ENCODE measurements at regions of chr1 and their contacts with region 1.

Region 1: GRCh38 chr1:243850452-243851256 is 611 bp upstream of the AKT3 start:
- DNase-seq: peak; percentile 87 to 91 (median 89)
- H3K4me3 ChIP-seq: peak overlapping the region; percentile 63 to 70
- H3K4me3 Mint-ChIP-seq: peak overlapping the region; percentile 90 to 95 (median 94)
- H3K27ac ChIP-seq: peak overlapping the region; percentile 95
- H3K27ac Mint-ChIP-seq: peak overlapping the region; percentile 86 to 98 (median 97)
- H3K4me1 ChIP-seq: peaks cover 38% of the 10 kb centered on the region
- H3K4me1 Mint-ChIP-seq: peaks cover 22 to 39% (median 31%) of the 10 kb centered on the region in 4 donors
- H3K27me3 ChIP-seq: no peaks in the 10 kb centered on the region
- H3K27me3 Mint-ChIP-seq: peaks cover 0 to 2% of the 10 kb centered on the region in 2 donors

Region 2: DNA sequence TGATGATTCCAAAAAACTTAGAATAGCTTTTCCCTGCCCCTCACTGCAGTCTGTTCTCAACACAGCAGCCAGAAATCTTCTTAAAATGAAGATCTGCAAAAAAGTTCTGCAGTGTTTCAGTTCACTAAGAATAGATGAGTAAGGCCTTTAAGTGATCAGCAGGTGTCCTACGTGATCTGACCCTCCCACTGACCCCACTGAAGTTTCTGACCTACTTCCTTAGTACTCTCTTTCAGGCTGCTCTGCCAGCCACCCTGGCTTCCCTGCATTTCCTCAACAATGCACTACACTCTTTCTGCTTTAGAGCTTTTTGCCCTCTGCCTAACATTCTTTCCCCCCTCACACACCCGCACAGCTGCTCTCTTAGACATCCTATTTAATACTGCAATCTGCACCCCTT is 183.1 kb before region 1 on chr1:
- CTCF ChIA-PET with region 1: no interaction called
- POLR2A ChIA-PET with region 1: no interaction called
- intact Hi-C with region 1: no loop called
- DNase-seq: no peak
- H3K4me3 ChIP-seq: no peak overlapping the region
- H3K4me3 Mint-ChIP-seq: no peak overlapping the region
- H3K27ac ChIP-seq: no peak overlapping the region
- H3K27ac Mint-ChIP-seq: peak overlapping the region in 6 of 7 donors; percentile 14 to 69 (median 42)
- H3K4me1 ChIP-seq: no peaks in the 10 kb centered on the region
- H3K4me1 Mint-ChIP-seq: peaks cover 8 to 27% (median 12%) of the 10 kb centered on the region in 4 donors
- H3K27me3 ChIP-seq: no peaks in the 10 kb centered on the region
- H3K27me3 Mint-ChIP-seq: no peaks in the 10 kb centered on the region

Region 3: GRCh38 chr1:243748706-243749283 is 101.9 kb before region 1 on chr1:
- CTCF ChIA-PET with region 1: interaction called, 4 read pairs
- POLR2A ChIA-PET with region 1: no interaction called
- intact Hi-C with region 1: loop called (anchors 5 kb)
- DNase-seq: peak in 4 of 5 donors; percentile 32 to 56 (median 44)
- H3K4me3 ChIP-seq: no peak overlapping the region
- H3K4me3 Mint-ChIP-seq: no peak overlapping the region
- H3K27ac ChIP-seq: no peak overlapping the region
- H3K27ac Mint-ChIP-seq: peak overlapping the region in 5 of 7 donors; percentile 14 to 75 (median 29)
- H3K4me1 ChIP-seq: peaks cover 5% of the 10 kb centered on the region
- H3K4me1 Mint-ChIP-seq: peaks cover 28 to 46% (median 36%) of the 10 kb centered on the region in 4 donors
- H3K27me3 ChIP-seq: no peaks in the 10 kb centered on the region
- H3K27me3 Mint-ChIP-seq: no peaks in the 10 kb centered on the region

Region 4: GRCh38 chr1:243864913-243865312 is 14.3 kb after region 1 on chr1:
- CTCF ChIA-PET with region 1: no interaction called
- POLR2A ChIA-PET with region 1: no interaction called
- intact Hi-C with region 1: no loop called
- DNase-seq: no peak
- H3K4me3 ChIP-seq: no peak overlapping the region
- H3K4me3 Mint-ChIP-seq: no peak overlapping the region
- H3K27ac ChIP-seq: no peak overlapping the region
- H3K27ac Mint-ChIP-seq: no peak overlapping the region
- H3K4me1 ChIP-seq: no peaks in the 10 kb centered on the region
- H3K4me1 Mint-ChIP-seq: peaks cover 0 to 4% (median 0%) of the 10 kb centered on the region in 4 donors
- H3K27me3 ChIP-seq: no peaks in the 10 kb centered on the region
- H3K27me3 Mint-ChIP-seq: peaks cover 0 to 2% of the 10 kb centered on the region in 2 donors

Region 5: DNA sequence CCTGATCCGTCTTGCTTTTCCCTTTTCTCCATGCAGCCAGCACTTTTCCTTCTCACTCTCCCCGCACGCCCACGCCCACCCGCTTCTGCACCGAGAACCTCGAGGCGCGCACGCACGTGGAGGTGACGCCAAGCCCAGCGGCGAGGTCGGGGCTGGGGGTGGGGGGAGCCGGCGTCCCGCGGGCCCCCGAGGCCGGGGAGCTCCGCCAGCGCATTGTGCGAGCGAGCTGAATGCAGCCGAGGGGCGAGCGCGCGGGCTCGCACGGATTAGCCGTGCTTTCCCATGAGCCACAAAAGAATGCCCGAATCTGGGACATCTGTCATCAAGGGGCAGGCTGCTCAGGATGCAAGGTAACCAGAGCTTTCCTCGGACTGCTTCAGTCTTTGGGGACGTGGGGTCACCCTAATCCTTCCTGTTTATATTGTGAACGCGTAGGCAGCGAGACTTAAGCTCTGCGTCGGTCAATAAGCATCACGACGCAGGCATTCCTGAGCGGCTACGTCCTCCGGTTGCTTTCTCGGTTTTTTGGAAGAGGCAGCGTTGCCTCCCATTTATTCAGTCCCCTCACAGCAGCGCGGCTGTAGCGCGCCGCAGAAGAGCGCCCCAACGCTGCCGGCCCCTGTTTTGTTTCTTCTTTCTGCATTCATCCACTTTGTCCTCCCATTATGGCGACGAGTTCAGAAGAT is 66.7 kb after region 1 on chr1:
- CTCF ChIA-PET with region 1: no interaction called
- POLR2A ChIA-PET with region 1: no interaction called
- intact Hi-C with region 1: loop called (anchors 10 kb)
- DNase-seq: peak in 4 of 5 donors; percentile 7 to 11 (median 8)
- H3K4me3 ChIP-seq: peak overlapping the region; percentile 36 to 45
- H3K4me3 Mint-ChIP-seq: peak overlapping the region; percentile 75 to 90 (median 84)
- H3K27ac ChIP-seq: no peak overlapping the region
- H3K27ac Mint-ChIP-seq: peak overlapping the region in 2 of 7 donors; percentile 9 to 15
- H3K4me1 ChIP-seq: peaks cover 17% of the 10 kb centered on the region
- H3K4me1 Mint-ChIP-seq: peaks cover 13 to 22% (median 19%) of the 10 kb centered on the region in 4 donors
- H3K27me3 ChIP-seq: peaks cover 20% of the 10 kb centered on the region
- H3K27me3 Mint-ChIP-seq: peaks cover 41 to 49% of the 10 kb centered on the region in 2 donors

Region 6: DNA sequence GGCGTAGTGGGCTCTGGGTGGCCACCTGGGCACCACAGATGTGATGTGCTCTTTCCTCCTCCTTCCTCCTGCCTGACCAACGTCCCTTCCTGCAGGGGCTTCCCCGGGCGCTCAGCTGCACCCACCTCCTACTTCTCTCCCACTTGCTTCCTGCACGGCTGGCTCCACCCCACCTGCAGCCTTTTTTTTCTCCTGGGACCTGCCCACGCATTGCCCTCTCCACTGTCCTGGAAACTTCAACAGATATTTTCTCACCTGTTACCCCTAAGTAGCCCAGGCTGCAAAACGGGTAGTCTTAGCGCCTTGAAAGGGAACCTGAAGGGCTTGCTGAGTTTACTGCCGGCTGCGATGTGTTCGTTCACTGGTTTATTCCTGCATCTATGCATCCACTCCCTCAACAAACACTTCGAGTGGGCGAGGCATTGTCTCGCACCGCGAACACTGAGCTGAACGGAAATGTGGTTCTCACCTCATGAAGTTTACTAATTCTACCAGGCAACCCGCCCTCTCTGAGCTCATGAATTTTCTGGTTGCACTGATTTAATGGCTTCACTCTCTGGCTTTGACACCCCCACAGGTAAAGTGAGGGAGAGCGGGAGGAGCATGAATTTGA is 224.0 kb after region 1 on chr1:
- CTCF ChIA-PET with region 1: no interaction called
- POLR2A ChIA-PET with region 1: interaction called, 11 read pairs
- intact Hi-C with region 1: no loop called
- DNase-seq: peak; percentile 80 to 88 (median 86)
- H3K4me3 ChIP-seq: peak overlapping the region; percentile 5 to 49
- H3K4me3 Mint-ChIP-seq: peak overlapping the region; percentile 88 to 96 (median 91)
- H3K27ac ChIP-seq: peak overlapping the region; percentile 27
- H3K27ac Mint-ChIP-seq: peak overlapping the region; percentile 90 to 99 (median 97)
- H3K4me1 ChIP-seq: peaks cover 32% of the 10 kb centered on the region
- H3K4me1 Mint-ChIP-seq: peaks cover 26 to 38% (median 31%) of the 10 kb centered on the region in 4 donors
- H3K27me3 ChIP-seq: no peaks in the 10 kb centered on the region
- H3K27me3 Mint-ChIP-seq: no peaks in the 10 kb centered on the region

Region 7: GRCh38 chr1:244361764-244362473 is 511.3 kb after region 1 on chr1:
- CTCF ChIA-PET with region 1: no interaction called
- POLR2A ChIA-PET with region 1: no interaction called
- intact Hi-C with region 1: no loop called
- DNase-seq: no peak
- H3K4me3 ChIP-seq: no peak overlapping the region
- H3K4me3 Mint-ChIP-seq: no peak overlapping the region
- H3K27ac ChIP-seq: no peak overlapping the region
- H3K27ac Mint-ChIP-seq: no peak overlapping the region
- H3K4me1 ChIP-seq: no peaks in the 10 kb centered on the region
- H3K4me1 Mint-ChIP-seq: no peaks in the 10 kb centered on the region
- H3K27me3 ChIP-seq: no peaks in the 10 kb centered on the region
- H3K27me3 Mint-ChIP-seq: no peaks in the 10 kb centered on the region

Region 8: GRCh38 chr1:244652699-244653466 is 802.2 kb after region 1 on chr1 and contains the start of gene DESI2:
- CTCF ChIA-PET with region 1: no interaction called
- POLR2A ChIA-PET with region 1: no interaction called
- intact Hi-C with region 1: loop called (anchors 2 kb)
- DNase-seq: peak; percentile 97 to 100 (median 99)
- H3K4me3 ChIP-seq: peak within 1 kb of the TSS; percentile 61 to 73
- H3K4me3 Mint-ChIP-seq: peak within 1 kb of the TSS; percentile 80 to 91 (median 86)
- H3K27ac ChIP-seq: peak within 1 kb of the TSS; percentile 89
- H3K27ac Mint-ChIP-seq: peak within 1 kb of the TSS; percentile 43 to 95 (median 93)
- H3K4me1 ChIP-seq: peaks cover 43% of the 10 kb centered on the region
- H3K4me1 Mint-ChIP-seq: peaks cover 21 to 24% (median 22%) of the 10 kb centered on the region in 4 donors
- H3K27me3 ChIP-seq: no peaks in the 10 kb centered on the region
- H3K27me3 Mint-ChIP-seq: no peaks in the 10 kb centered on the region
- total RNA-seq, gene DESI2: 21.1 to 22.8 TPM

Measured in CD4-positive, alpha-beta memory T cell (primary cell).